ENCODE measurements at regions of chr12 and their contacts with region 1.

Region 1: DNA sequence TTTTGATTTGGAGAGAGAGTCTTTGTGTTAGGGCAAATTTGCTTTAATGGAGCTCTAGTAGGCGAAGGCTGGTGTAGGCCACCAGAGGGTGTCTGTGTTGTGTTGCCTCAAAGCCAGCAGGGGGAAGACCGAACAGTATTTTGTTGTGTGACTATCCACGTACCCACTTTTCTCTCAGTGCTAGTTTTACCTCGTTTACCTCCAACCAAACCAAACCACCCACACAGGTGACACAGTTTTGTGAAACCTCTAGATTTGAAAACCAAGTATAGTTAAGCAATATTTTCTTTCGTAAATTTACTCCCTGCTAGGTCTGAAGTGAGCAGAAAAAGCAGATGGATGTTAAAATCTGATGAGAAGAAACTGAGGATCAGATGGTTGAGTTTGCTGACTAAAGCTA is 36.3 kb upstream of the NPFF start:
- DNase-seq: no peak
- H3K4me3 ChIP-seq: no peak overlapping the region
- H3K27me3 ChIP-seq: no peaks in the 10 kb centered on the region
- CTCF ChIP-seq: peak; percentile 90

Region 2: DNA sequence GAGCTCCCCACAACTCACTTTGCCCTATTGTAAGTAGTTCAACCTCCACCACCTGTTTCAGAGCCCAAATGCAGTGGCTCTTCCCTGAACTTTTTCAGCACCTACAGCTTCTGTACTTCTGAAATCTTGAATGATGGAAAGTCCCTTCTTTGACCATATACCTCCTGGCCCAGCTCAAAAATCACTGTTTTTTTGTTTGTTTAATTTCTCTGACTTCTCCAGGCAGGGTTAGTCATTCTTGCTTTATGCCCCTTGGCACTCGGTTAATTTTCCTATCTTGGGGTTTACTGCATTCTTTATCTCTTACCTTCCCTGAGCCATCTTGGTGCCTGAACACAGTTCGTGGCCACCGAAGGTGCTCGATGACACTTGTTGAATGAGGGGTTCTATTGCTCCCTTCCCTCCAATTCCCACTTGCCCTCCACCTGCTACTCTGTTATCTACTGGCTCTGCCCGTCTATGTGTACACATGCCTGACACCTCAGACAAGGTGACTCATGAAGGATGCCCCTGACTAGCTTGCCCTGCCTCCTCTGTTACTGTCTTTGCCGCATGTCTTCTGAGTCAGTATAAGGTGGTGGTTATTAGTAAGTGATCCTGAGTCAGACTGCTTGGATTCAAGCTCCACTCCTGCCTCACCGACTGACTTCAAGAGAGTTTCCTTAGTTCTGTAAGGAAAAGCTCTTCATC is 115.5 kb before region 1 on chr12:
- CTCF ChIA-PET with region 1: no interaction called
- POLR2A ChIA-PET with region 1: no interaction called
- DNase-seq: peak; percentile 76
- H3K4me3 ChIP-seq: no peak overlapping the region
- H3K27me3 ChIP-seq: no peaks in the 10 kb centered on the region
- CTCF ChIP-seq: no peak

Region 3: GRCh38 chr12:53532524-53533445 is 10.8 kb before region 1 on chr12:
- CTCF ChIA-PET with region 1: interaction called, 11 read pairs
- POLR2A ChIA-PET with region 1: no interaction called
- DNase-seq: no peak
- H3K4me3 ChIP-seq: no peak overlapping the region
- H3K27me3 ChIP-seq: no peaks in the 10 kb centered on the region
- CTCF ChIP-seq: no peak

Region 4: GRCh38 chr12:53558631-53559030 is 15.1 kb after region 1 on chr12:
- CTCF ChIA-PET with region 1: interaction called, 11 read pairs
- POLR2A ChIA-PET with region 1: no interaction called
- DNase-seq: no peak
- H3K4me3 ChIP-seq: no peak overlapping the region
- H3K27me3 ChIP-seq: no peaks in the 10 kb centered on the region
- CTCF ChIP-seq: no peak

Region 5: DNA sequence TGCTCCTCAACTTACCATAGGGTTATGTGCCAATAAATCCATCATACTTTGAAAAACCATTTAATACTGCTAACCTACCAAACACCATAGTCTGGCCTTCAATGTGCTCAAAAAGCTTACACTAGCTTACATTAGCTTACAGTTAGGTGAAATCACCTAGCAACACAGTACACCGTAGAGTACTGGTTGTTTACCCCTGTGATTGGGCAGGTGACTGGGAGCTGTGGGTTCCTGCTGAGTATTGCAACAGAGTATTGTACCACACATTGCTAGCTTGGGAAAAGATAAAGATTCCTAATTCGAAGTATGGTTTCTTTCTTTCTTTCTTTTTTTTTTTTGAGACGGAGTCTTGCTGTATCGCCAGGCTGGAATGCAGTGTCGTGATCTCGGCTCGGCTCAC is 126.8 kb after region 1 on chr12:
- CTCF ChIA-PET with region 1: interaction called, 125 read pairs
- POLR2A ChIA-PET with region 1: no interaction called
- DNase-seq: no peak
- H3K4me3 ChIP-seq: no peak overlapping the region
- H3K27me3 ChIP-seq: no peaks in the 10 kb centered on the region
- CTCF ChIP-seq: no peak

Region 6: DNA sequence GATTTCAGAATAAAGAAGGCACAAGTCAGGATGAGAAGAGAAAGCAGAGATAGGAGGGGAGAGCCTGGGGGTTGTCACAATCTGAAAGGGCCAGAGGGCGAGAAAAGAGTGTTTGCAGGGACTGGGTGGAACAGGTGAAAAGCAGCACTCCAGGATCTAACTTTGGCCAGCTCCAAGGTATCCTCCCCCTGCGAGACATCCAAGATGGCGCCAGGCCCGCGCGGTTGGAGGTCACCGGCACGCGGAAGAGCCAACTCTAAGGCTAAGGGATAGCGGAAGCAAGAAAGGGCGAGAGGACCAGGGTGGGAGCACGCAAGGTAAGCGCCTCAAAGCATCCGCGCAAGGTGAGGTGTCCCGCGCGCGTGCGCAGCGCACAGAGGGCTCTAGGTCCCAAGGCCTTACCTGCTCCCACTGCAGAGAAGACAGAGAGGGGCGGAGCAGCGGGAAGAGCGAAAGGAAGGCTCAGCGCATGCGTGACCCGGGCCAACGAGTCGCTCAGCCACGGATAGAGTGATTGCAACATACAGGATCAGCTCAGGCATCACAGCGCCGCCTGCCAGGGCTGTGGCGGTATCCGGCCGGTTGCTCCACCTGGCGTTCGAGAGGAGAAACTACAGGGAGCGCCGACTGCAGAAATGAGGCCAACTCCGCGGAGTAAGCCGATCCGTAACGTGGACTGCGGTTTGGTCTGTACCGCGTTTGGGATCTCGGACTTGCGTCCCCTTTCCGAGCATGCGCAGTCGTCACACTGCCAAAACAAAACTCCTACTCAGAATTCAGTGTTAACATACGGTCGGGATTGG is 132.3 kb after region 1 on chr12 and contains the start of gene ATP5MC2:
- CTCF ChIA-PET with region 1: interaction called, 125 read pairs
- POLR2A ChIA-PET with region 1: no interaction called
- DNase-seq: peak; percentile 96
- H3K4me3 ChIP-seq: peak within 1 kb of the TSS; percentile 76
- H3K27me3 ChIP-seq: no peaks in the 10 kb centered on the region
- CTCF ChIP-seq: peak; percentile 99
- polyA plus RNA-seq, gene ATP5MC2: 356 and 381 TPM in 2 replicates

Measured in BJ (cell line).